ENCODE measurements at regions of chr12 and their contacts with region 1.

Region 1: DNA sequence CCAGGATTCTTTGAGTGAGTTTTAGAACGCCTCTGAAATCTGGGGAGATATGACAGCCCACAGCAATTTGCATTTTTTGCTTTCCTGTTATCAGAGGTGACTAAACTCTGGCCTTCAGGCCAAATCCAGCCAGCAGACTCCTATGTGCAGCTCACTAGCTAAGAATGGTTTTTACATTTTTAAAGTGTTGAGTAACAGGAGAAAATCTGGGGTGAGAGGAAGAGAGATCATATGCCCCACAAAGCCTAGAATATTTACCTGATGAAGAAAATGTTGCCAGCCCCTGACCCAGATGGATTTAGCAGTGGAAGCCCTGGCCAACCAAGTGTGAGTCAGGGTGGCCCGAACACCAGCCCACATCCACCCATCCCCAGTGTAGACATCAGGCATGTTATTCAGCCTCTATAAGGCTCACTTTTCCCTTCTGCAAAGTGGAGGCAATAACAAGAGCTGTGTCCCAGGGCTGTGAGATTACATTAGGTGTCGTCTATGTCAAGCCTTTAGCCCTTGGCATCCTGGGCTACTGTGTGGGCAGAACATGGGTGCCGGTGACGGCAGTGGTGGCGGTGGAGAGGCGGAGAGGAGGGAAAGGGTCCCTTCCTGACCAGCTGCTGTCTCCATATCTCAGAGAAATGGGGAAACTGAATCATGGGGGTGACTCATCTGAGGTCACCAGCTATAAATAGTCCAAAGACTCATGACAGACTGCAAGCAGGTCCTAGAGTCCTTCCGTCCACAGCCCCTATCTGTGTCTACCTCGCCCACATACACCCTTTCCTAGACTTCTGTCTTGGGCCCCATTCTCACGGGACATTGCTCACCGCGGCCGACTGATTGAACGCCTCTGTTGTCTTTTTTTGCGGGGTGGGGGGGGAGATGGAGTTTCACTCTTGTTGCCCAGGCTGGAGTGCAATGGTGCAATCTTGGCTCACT is 32.6 kb upstream of the CD9 start:
- DNase-seq: peak; percentile 84
- ATAC-seq: peak; percentile 89
- H3K4me3 Mint-ChIP-seq: peak overlapping the region; percentile 26
- H3K27ac Mint-ChIP-seq: peak overlapping the region; percentile 87
- H3K4me1 Mint-ChIP-seq: peaks cover 32% of the 10 kb centered on the region
- H3K27me3 Mint-ChIP-seq: no peaks in the 10 kb centered on the region

Region 2: GRCh38 chr12:6062757-6063735 is 104.5 kb before region 1 on chr12:
- CTCF ChIA-PET with region 1: no interaction called
- POLR2A ChIA-PET with region 1: no interaction called
- intact Hi-C with region 1: loop called in 1 of 2 experiments (anchors 10 kb)
- DNase-seq: peak; percentile 75
- ATAC-seq: peak; percentile 90
- H3K4me3 Mint-ChIP-seq: no peak overlapping the region
- H3K27ac Mint-ChIP-seq: no peak overlapping the region
- H3K4me1 Mint-ChIP-seq: no peaks in the 10 kb centered on the region
- H3K27me3 Mint-ChIP-seq: peaks cover 4% of the 10 kb centered on the region

Region 3: GRCh38 chr12:6069437-6070107 is 98.0 kb before region 1 on chr12:
- CTCF ChIA-PET with region 1: no interaction called
- POLR2A ChIA-PET with region 1: no interaction called
- intact Hi-C with region 1: loop called (anchors 1 to 10 kb)
- DNase-seq: peak; percentile 65
- ATAC-seq: peak; percentile 63
- H3K4me3 Mint-ChIP-seq: no peak overlapping the region
- H3K27ac Mint-ChIP-seq: no peak overlapping the region
- H3K4me1 Mint-ChIP-seq: peaks cover 20% of the 10 kb centered on the region
- H3K27me3 Mint-ChIP-seq: peaks cover 7% of the 10 kb centered on the region

Region 4: DNA sequence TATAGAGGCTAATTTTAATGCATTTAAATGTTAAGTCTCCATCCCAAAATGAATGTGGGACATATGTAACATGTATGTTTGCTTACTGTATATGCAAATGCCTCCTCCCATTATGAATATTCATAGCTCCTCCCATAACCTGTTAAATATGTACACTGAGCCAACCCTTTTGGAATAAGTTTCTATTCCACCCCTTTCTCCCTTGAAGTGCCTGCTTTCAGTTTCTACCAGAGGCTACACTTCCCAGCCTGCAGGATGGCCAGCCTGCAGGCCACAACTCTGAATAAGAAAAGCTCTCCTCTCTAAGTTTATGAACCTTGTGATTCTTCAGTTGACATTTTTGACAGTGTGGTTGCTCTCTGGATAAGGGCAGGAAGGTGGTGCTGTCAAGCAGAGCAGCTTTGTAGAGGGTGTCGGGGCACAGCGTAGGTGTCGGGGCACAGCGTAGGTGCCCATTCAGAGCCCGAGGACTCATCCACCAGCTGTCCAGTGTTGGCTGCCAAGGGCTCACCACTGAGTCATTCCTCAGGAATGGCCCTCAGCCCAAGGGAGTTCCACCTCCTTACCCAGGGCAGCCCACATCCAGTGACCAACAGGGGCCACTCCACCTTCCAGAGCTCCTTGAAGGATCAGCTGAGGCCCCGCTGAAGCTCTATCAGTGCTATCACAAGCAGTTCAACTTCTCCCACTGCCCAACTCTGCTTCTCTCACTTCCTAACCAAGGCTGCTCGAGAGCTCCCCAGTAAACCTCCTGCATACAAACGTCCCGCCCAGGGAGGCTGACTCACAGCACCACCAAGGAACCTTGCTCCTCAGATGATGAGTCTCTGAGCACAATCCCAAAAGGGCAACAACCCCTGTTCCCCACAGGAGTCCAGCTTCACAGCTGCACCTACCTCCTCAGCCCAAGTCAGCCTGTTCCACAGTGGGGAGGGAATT is 74.5 kb before region 1 on chr12:
- CTCF ChIA-PET with region 1: no interaction called
- POLR2A ChIA-PET with region 1: no interaction called
- intact Hi-C with region 1: no loop called
- DNase-seq: no peak
- ATAC-seq: no peak
- H3K4me3 Mint-ChIP-seq: no peak overlapping the region
- H3K27ac Mint-ChIP-seq: no peak overlapping the region
- H3K4me1 Mint-ChIP-seq: no peaks in the 10 kb centered on the region
- H3K27me3 Mint-ChIP-seq: peaks cover 7% of the 10 kb centered on the region

Region 5: GRCh38 chr12:6140651-6141447 is 26.7 kb before region 1 on chr12:
- CTCF ChIA-PET with region 1: interaction called, 5 read pairs
- POLR2A ChIA-PET with region 1: interaction called, 6 read pairs
- intact Hi-C with region 1: loop called in 1 of 2 experiments (anchors 1 kb)
- DNase-seq: peak; percentile 58
- ATAC-seq: peak; percentile 77
- H3K4me3 Mint-ChIP-seq: peak overlapping the region; percentile 28
- H3K27ac Mint-ChIP-seq: peak overlapping the region; percentile 93
- H3K4me1 Mint-ChIP-seq: peaks cover 48% of the 10 kb centered on the region
- H3K27me3 Mint-ChIP-seq: no peaks in the 10 kb centered on the region

Region 6: GRCh38 chr12:6230321-6231110 is 62.9 kb after region 1 on chr12:
- CTCF ChIA-PET with region 1: no interaction called
- POLR2A ChIA-PET with region 1: no interaction called
- intact Hi-C with region 1: loop called in 1 of 2 experiments (anchors 2 kb)
- DNase-seq: peak; percentile 87
- ATAC-seq: peak; percentile 87
- H3K4me3 Mint-ChIP-seq: peak overlapping the region; percentile 49
- H3K27ac Mint-ChIP-seq: peak overlapping the region; percentile 84
- H3K4me1 Mint-ChIP-seq: peaks cover 33% of the 10 kb centered on the region
- H3K27me3 Mint-ChIP-seq: no peaks in the 10 kb centered on the region

Region 7: GRCh38 chr12:6267139-6267721 is 99.6 kb after region 1 on chr12:
- CTCF ChIA-PET with region 1: interaction called, 3 read pairs
- POLR2A ChIA-PET with region 1: no interaction called
- intact Hi-C with region 1: loop called in 1 of 2 experiments (anchors 1 kb)
- DNase-seq: peak; percentile 84
- ATAC-seq: peak; percentile 87
- H3K4me3 Mint-ChIP-seq: no peak overlapping the region
- H3K27ac Mint-ChIP-seq: peak overlapping the region; percentile 55
- H3K4me1 Mint-ChIP-seq: peaks cover 16% of the 10 kb centered on the region
- H3K27me3 Mint-ChIP-seq: peaks cover 2% of the 10 kb centered on the region

Region 8: DNA sequence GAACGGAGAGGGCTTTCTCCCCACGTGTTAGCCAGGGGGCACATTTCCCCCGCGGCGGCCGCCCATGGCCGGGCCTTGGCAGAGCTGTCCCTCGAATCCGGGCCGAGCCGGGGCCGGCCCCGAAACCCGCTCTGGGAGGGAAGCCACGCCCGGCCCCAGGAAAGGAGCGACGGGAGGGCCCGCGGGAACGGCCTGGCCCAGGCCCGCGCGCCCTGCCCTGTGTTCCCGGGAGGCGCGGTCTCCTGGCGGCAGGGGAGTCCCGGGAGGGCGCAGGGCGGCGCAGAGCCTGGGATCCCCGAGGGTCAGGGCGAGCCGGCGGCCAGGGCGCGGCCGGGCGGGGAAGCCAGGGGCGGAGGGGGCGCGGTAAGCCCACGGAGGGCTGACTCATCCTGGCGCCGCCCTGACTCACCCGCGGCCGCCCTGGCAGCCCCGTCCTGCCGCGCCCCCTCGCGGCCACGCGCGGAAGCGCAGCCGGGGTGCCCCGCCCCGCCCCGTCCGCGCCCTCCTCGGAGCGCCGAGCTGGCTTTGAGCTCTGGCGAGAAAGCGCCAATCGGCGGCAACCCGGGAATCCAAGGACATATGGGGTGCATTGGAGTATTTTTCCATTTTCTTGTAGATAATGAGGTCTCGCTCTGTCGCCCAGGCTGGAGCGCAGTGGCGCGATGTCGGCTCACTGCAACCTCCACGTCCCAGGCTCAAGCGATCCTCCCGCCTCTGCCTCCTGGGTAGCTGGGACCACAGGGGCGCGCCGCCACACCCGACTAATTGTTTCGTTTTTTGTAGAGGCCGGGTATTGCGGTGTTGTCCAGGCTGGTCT is 111.1 kb after region 1 on chr12:
- CTCF ChIA-PET with region 1: interaction called, 5 read pairs
- POLR2A ChIA-PET with region 1: no interaction called
- intact Hi-C with region 1: loop called in 1 of 2 experiments (anchors 1 kb)
- DNase-seq: peak; percentile 91
- ATAC-seq: peak; percentile 94
- H3K4me3 Mint-ChIP-seq: peak overlapping the region; percentile 69
- H3K27ac Mint-ChIP-seq: peak overlapping the region; percentile 78
- H3K4me1 Mint-ChIP-seq: peaks cover 5% of the 10 kb centered on the region
- H3K27me3 Mint-ChIP-seq: peaks cover 9% of the 10 kb centered on the region